ENCODE measurements at regions of chr20 and their contacts with region 1.

Region 1: GRCh38 chr20:40970201-40970600 is 58.4 kb upstream of the TOP1 start:
- DNase-seq: no peak
- ATAC-seq: no peak
- H3K4me3 ChIP-seq: no peak overlapping the region
- H3K27ac ChIP-seq: no peak overlapping the region
- H3K4me1 ChIP-seq: no peaks in the 10 kb centered on the region
- H3K27me3 ChIP-seq: no peaks in the 10 kb centered on the region
- CTCF ChIP-seq: no peak
- EP300 ChIP-seq: no peak
- POLR2A ChIP-seq: no peak
- RAD21 ChIP-seq: no peak

Region 2: DNA sequence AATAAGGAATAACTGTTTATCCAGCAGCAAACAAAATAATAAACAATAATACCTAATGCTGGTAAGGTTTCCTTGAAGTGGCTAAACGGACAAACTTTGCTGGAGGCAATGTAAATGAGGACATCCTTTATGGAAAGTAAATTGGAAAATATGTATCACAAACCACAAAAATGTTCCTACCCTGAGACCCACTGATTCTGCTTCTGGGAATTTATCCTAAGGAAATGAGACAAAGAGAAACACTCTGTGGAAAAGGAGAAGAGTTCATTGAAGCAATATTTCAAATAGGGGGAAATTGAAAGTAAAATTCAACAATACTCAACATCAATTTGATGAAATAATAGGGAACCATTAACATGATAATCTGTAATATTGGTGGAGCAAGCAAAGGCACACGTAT is 319.1 kb before region 1 on chr20:
- CTCF ChIA-PET with region 1: no interaction called
- POLR2A ChIA-PET with region 1: no interaction called
- RAD21 ChIA-PET with region 1: no interaction called
- SMC1A ChIA-PET with region 1: no interaction called
- in situ Hi-C with region 1: no loop called
- intact Hi-C with region 1: no loop called
- DNase-seq: no peak
- ATAC-seq: no peak
- H3K4me3 ChIP-seq: no peak overlapping the region
- H3K27ac ChIP-seq: no peak overlapping the region
- H3K4me1 ChIP-seq: no peaks in the 10 kb centered on the region
- H3K27me3 ChIP-seq: peaks cover 2 to 6% of the 10 kb centered on the region in 2 experiments; a peak in 3 of 4 replicates
- CTCF ChIP-seq: no peak
- EP300 ChIP-seq: no peak
- POLR2A ChIP-seq: no peak
- RAD21 ChIP-seq: no peak

Region 3: DNA sequence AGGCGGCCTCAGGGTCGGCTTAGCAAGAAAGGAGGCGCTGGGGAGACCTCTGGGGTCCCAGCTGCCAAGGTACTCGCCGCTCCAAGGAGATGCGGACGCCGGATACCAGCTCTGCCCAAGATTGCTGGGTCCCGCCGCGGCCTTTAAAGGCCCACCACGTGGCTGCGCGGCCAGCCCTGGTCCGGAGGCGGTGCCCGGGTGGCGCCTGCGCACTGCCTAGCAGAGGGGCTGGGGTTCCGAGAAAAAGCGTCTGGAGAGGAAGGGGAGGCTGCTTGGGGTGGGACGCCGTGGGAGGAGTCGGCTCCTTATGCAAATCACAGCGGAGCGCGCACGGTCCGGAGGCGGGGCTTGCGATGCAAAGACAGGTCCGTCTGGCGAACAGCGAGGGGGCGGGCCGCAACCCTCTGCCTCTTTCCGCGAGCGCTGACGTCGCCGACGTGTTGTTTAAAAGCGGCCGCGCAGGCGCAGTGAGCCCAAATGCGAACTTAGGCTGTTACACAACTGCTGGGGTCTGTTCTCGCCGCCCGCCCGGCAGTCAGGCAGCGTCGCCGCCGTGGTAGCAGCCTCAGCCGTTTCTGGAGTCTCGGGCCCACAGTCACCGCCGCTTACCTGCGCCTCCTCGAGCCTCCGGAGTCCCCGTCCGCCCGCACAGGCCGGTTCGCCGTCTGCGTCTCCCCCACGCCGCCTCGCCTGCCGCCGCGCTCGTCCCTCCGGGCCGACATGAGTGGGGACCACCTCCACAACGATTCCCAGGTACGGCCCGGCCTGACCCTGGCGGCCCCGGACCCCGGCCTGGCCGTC is 58.3 kb after region 1 on chr20 and contains the start of gene TOP1:
- CTCF ChIA-PET with region 1: interaction called, 7 read pairs
- POLR2A ChIA-PET with region 1: no interaction called
- RAD21 ChIA-PET with region 1: interaction called, 11 read pairs
- SMC1A ChIA-PET with region 1: interaction called, 13 read pairs
- in situ Hi-C with region 1: no loop called
- intact Hi-C with region 1: no loop called
- DNase-seq: peak; percentile 98
- ATAC-seq: peak; percentile 93
- H3K4me3 ChIP-seq: peak within 1 kb of the TSS; percentile 97
- H3K27ac ChIP-seq: peak within 1 kb of the TSS; percentile 95
- H3K4me1 ChIP-seq: peaks cover 5% of the 10 kb centered on the region
- H3K27me3 ChIP-seq: no peaks in the 10 kb centered on the region
- CTCF ChIP-seq: no peak
- EP300 ChIP-seq: no peak
- POLR2A ChIP-seq: peak; percentile 96
- RAD21 ChIP-seq: no peak
- polyA plus RNA-seq, gene TOP1: 36.1 to 47.6 TPM

Region 4: DNA sequence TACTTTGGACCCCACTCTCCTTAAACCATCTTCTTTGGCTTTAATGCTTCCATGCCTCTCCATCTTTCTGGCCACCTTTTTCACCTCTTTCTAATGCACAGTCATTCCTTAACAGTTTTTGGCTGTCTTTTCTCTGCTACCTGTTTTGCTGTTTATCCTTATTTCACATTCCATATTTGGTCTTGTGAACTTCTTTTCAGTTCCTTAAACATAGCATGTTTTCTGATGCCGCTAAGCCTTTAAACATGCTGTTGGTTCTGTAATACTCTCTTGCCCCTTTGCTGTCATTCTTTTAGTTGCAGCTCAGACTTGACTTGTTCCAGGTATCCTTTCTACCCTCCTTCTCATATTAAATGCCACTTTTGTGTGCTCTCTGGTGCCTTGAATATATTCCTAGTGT is 94.2 kb after region 1 on chr20:
- CTCF ChIA-PET with region 1: interaction called, 46 read pairs
- POLR2A ChIA-PET with region 1: interaction called, 3 read pairs
- RAD21 ChIA-PET with region 1: interaction called, 31 read pairs
- SMC1A ChIA-PET with region 1: interaction called, 41 read pairs
- in situ Hi-C with region 1: no loop called
- intact Hi-C with region 1: loop called (anchors 2 kb)
- DNase-seq: peak; percentile 68
- ATAC-seq: peak; percentile 93
- H3K4me3 ChIP-seq: no peak overlapping the region
- H3K27ac ChIP-seq: peak overlapping the region; percentile 62
- H3K4me1 ChIP-seq: peaks cover 20% of the 10 kb centered on the region
- H3K27me3 ChIP-seq: no peaks in the 10 kb centered on the region
- CTCF ChIP-seq: peak; percentile 8 to 59 (median 36); a peak in 3 of 6 replicates
- EP300 ChIP-seq: no peak; a peak in 1 of 4 replicates
- POLR2A ChIP-seq: no peak
- RAD21 ChIP-seq: peak; percentile 77

Region 5: DNA sequence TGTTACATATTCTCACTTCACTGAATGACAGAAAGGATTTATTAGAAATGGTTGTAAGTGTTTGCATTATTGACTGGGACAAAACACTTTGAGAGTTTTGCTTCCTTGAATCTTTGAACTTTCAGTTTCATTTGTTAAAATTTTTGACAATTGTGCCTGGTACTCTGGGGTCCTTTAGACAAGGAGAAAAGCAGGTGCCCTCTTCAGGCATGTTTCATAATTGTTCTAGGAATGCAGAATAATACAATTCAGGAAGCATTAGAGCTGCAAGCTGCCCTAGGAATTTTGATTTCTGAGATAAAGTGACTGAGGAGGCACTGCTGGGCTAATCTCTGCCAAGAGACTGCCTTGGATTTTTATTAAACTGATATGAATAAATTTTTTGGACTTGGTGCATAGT is 108.1 kb after region 1 on chr20:
- CTCF ChIA-PET with region 1: interaction called, 14 read pairs
- POLR2A ChIA-PET with region 1: no interaction called
- RAD21 ChIA-PET with region 1: interaction called, 5 read pairs
- SMC1A ChIA-PET with region 1: interaction called, 10 read pairs
- in situ Hi-C with region 1: no loop called
- intact Hi-C with region 1: loop called (anchors 2 kb)
- DNase-seq: peak; percentile 21
- ATAC-seq: peak; percentile 71
- H3K4me3 ChIP-seq: no peak overlapping the region
- H3K27ac ChIP-seq: no peak overlapping the region
- H3K4me1 ChIP-seq: peaks cover 12% of the 10 kb centered on the region
- H3K27me3 ChIP-seq: no peaks in the 10 kb centered on the region
- CTCF ChIP-seq: peak in 2 of 3 experiments; percentile 20 to 21; a peak in 1 of 6 replicates
- EP300 ChIP-seq: no peak
- POLR2A ChIP-seq: no peak
- RAD21 ChIP-seq: peak; percentile 50

Region 6: DNA sequence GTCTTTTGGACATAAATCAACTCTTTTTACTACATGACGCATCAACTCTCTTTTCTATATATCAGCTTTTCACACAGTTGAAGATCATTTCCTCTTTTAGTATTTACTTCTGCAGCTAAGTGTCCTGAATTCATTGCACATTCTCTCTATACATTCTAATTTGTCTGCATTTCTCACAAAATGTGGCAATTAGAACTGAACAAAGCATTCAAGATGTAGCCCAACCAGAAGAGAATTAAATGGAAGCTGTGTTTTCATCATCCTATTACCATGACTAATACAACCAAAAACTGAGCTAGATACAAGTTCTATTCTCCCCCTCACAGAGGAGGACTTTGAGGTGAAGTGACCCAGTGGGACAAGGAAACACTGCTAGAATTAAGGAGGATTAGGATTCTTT is 254.1 kb after region 1 on chr20:
- CTCF ChIA-PET with region 1: interaction called, 10 read pairs
- POLR2A ChIA-PET with region 1: no interaction called
- RAD21 ChIA-PET with region 1: no interaction called
- SMC1A ChIA-PET with region 1: no interaction called
- in situ Hi-C with region 1: no loop called
- intact Hi-C with region 1: no loop called
- DNase-seq: no peak
- ATAC-seq: no peak
- H3K4me3 ChIP-seq: no peak overlapping the region
- H3K27ac ChIP-seq: no peak overlapping the region
- H3K4me1 ChIP-seq: no peaks in the 10 kb centered on the region
- H3K27me3 ChIP-seq: no peaks in the 10 kb centered on the region
- CTCF ChIP-seq: no peak
- EP300 ChIP-seq: no peak
- POLR2A ChIP-seq: no peak
- RAD21 ChIP-seq: no peak

Region 7: GRCh38 chr20:41339507-41340326 is 369.5 kb after region 1 on chr20:
- CTCF ChIA-PET with region 1: interaction called, 21 read pairs
- POLR2A ChIA-PET with region 1: no interaction called
- RAD21 ChIA-PET with region 1: interaction called, 6 read pairs
- SMC1A ChIA-PET with region 1: interaction called, 3 read pairs
- in situ Hi-C with region 1: loop called (anchors 5 kb)
- intact Hi-C with region 1: loop called (anchors 5 kb)
- DNase-seq: no peak
- ATAC-seq: peak; percentile 96
- H3K4me3 ChIP-seq: peak overlapping the region; percentile 68
- H3K27ac ChIP-seq: no peak overlapping the region
- H3K4me1 ChIP-seq: peaks cover 5% of the 10 kb centered on the region
- H3K27me3 ChIP-seq: no peaks in the 10 kb centered on the region
- CTCF ChIP-seq: peak; percentile 92 to 96 (median 95)
- EP300 ChIP-seq: no peak
- POLR2A ChIP-seq: no peak
- RAD21 ChIP-seq: peak; percentile 96

Measured in GM12878 (cell line).